ENCODE measurements at regions of chr3 and their contacts with region 1.

Region 1: DNA sequence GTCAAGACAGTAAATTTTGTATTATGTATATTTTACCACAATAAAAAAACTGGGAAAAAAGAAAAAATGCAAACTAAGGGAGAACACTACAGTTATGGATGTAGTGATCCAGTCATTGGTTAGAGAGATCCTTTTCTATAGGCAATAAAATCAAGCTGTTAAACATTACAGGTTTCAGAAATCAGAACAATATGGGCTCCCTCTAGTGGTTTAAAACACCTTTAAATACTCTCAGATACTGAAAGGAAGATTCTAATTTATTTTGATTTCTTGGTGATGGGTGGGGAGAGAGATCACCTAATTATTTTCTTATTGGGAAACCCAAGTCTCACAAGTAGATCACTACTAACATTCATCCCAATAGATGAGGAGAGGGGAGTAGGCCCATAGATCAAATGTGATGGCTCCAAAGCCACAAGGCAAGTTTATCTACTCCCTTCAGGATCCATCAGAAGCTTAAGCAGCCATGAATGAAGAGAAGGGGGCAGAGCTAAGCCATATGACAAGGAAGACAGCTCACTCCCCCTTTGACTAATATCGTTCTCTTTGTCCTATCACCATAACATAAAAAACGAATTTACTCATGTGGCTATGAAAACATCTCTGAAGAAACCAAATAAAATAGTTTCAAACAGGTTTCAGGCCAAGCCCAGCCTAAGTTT is 118.6 kb downstream of the ANO10 start:
- DNase-seq: no peak
- ATAC-seq: peak; percentile 62; the same call in 1 of the 2 replicates
- H3K4me3 ChIP-seq: no peak overlapping the region
- H3K27ac ChIP-seq: no peak overlapping the region
- H3K4me1 ChIP-seq: no peaks in the 10 kb centered on the region
- H3K27me3 ChIP-seq: no peaks in the 10 kb centered on the region
- CTCF ChIP-seq: peak; percentile 61

Region 2: GRCh38 chr3:43162230-43163084 is 340.7 kb before region 1 on chr3:
- CTCF ChIA-PET with region 1: interaction called, 3 read pairs
- POLR2A ChIA-PET with region 1: no interaction called
- in situ Hi-C with region 1: no loop called
- intact Hi-C with region 1: loop called (anchors 10 kb)
- DNase-seq: no peak
- ATAC-seq: 0 out of 2 replicates have a peak, but pooled peaks have one; percentile 68
- H3K4me3 ChIP-seq: no peak overlapping the region
- H3K27ac ChIP-seq: no peak overlapping the region
- H3K4me1 ChIP-seq: no peaks in the 10 kb centered on the region
- H3K27me3 ChIP-seq: no peaks in the 10 kb centered on the region
- CTCF ChIP-seq: 0 out of 2 replicates have a peak, but pooled peaks have one; percentile 12

Measured in Panc1 (cell line).